SK-N-SH (cell line): ENCODE measurements at regions of chr2 and their contacts with region 1.

Region 1: DNA sequence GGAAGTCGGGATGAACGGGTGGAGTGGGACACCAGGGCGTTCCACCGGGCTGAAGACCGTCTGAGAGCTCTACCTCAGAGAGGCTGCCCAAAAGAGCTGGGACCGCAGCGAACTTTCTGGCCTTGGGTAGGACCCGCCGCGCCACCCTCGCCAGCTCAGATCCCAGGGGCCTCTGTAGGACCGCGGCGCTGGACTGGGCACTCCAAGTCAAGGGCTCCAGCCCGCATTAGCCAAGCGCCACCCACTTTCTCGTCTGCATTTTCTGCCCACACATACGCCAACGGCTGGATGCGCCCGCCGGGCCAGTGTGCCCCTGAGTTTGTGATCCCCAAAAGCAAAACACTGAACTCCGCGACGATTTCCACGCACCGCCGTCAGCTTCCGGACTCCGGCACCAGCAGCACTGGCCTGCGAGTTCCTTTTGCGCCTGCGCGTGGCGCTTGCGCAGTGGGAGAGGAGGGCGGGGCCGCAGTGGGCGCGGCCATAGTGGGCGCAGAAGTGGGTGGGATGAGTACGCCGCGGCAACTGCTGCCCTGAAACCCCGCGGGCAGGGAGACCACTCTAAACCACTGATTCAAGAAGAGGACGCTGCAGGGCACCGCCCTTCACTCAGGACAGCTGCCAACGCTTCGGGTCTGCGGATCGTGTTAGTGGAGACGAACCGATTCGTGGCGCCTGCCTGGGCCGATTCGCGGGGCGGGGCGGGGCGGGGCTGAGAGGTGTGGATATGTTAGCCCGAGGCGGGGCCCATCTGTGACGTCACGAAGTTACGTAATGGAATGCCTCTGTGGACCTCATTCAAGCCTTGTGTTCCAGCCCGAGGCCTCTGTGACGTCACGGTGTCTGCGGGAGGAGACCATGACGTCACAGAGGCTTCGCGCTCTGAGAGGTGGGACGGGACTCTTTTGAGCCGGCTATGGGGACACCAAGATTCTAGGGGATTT is 10.5 kb downstream of the OSR1 start:
- DNase-seq: peak; percentile 98
- H3K4me3 ChIP-seq: peak overlapping the region; percentile 81 to 99
- H3K27ac ChIP-seq: peak overlapping the region; percentile 86 to 96
- H3K4me1 ChIP-seq: peaks cover 0 to 28% of the 10 kb centered on the region in 2 experiments; a peak in 2 of 4 replicates
- H3K27me3 ChIP-seq: no peaks in the 10 kb centered on the region
- CTCF ChIP-seq: no peak
- EP300 ChIP-seq: no peak; a peak in 1 of 4 replicates
- RAD21 ChIP-seq: no peak

Region 2: GRCh38 chr2:19292007-19292406 is 55.9 kb before region 1 on chr2:
- CTCF ChIA-PET with region 1: no interaction called
- POLR2A ChIA-PET with region 1: no interaction called
- DNase-seq: no peak
- H3K4me3 ChIP-seq: peak overlapping the region in 1 of 2 experiments; percentile 2; a peak in 1 of 4 replicates
- H3K27ac ChIP-seq: no peak overlapping the region
- H3K4me1 ChIP-seq: no peaks in the 10 kb centered on the region
- H3K27me3 ChIP-seq: no peaks in the 10 kb centered on the region
- CTCF ChIP-seq: no peak
- EP300 ChIP-seq: no peak
- RAD21 ChIP-seq: no peak

Region 3: DNA sequence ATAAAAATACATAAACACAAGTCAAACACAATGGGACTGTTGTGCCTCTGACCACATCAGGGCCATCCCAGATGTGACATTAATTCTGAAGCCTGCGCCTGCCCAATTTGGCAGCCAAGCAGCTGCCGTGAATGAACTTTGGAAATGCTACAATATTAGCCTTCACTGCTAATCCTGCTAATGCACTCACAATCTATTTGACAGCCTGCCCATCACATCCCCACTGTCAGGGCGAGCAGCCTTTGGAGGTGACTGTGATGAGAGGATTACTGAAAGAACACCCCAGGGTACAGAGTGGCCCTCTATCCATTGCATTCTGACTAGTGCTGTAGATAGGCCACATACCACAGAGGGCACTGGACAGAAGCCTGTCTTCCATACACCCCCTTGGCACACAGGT is 11.1 kb before region 1 on chr2:
- CTCF ChIA-PET with region 1: interaction called, 33 read pairs
- POLR2A ChIA-PET with region 1: no interaction called
- DNase-seq: no peak
- H3K4me3 ChIP-seq: no peak overlapping the region
- H3K27ac ChIP-seq: no peak overlapping the region
- H3K4me1 ChIP-seq: peaks cover 0 to 3% of the 10 kb centered on the region in 2 experiments; a peak in 1 of 4 replicates
- H3K27me3 ChIP-seq: no peaks in the 10 kb centered on the region
- CTCF ChIP-seq: no peak
- EP300 ChIP-seq: no peak
- RAD21 ChIP-seq: no peak

Region 4: GRCh38 chr2:19362755-19363473 is 15.0 kb after region 1 on chr2:
- CTCF ChIA-PET with region 1: interaction called, 79 read pairs
- POLR2A ChIA-PET with region 1: interaction called, 3 read pairs
- DNase-seq: peak; percentile 91
- H3K4me3 ChIP-seq: peak overlapping the region; percentile 66 to 76
- H3K27ac ChIP-seq: peak overlapping the region; percentile 52 to 59; a peak in 3 of 4 replicates
- H3K4me1 ChIP-seq: peaks cover 5 to 19% of the 10 kb centered on the region in 2 experiments; a peak in 1 of 4 replicates
- H3K27me3 ChIP-seq: no peaks in the 10 kb centered on the region
- CTCF ChIP-seq: peak; percentile 98
- EP300 ChIP-seq: peak; percentile 25 to 44; a peak in 1 of 4 replicates
- RAD21 ChIP-seq: peak; percentile 94

Region 5: DNA sequence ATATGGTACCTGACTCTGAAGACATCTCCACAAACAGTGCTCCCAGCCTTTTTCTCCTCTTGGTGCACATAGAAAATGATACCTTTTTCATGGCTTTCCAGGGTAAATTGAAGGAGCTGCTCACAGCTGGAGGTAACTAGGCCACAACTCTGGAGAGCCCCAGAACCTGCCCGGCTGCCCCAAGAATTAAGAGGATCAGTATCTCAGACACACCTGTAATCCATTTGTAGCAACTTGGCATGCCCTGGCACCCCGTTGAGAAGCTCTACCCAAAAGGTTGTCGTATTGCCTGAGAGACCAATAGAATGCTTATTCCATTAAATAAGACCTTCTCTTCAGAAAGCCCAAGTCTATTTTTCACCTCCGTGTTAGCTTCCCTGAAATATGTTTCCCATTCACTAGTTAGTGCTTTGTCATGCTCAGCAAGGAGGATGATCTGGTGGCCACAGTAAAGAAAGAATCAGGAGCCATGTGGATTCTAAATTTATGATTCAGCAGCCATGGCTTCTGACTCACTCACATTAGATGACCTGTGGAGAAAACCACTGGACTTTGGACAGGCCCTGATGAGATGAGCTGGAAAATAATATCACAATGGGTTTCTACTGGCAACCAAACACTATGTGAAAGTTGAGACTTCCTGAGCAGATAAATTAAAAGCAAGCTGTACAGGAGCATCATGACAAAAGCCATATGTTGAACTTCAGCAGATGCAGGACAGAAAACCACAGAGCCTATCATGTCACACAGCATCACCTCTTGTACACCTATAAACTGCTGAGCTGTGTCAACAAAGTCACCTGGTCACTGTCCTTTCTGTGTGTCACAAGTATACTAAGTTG is 263.8 kb after region 1 on chr2:
- CTCF ChIA-PET with region 1: no interaction called
- POLR2A ChIA-PET with region 1: no interaction called
- DNase-seq: no peak
- H3K4me3 ChIP-seq: no peak overlapping the region
- H3K27ac ChIP-seq: peak overlapping the region in 1 of 2 experiments; percentile 52; a peak in 2 of 4 replicates
- H3K4me1 ChIP-seq: 0 out of 4 replicates have a peak, but pooled peaks cover 0 to 3% of the 10 kb centered on the region in 2 experiments
- H3K27me3 ChIP-seq: no peaks in the 10 kb centered on the region; the same call in 1 of the 2 replicates
- CTCF ChIP-seq: no peak
- EP300 ChIP-seq: peak in 1 of 2 experiments; percentile 93; a peak in 2 of 4 replicates
- RAD21 ChIP-seq: no peak